Head of caudate nucleus (tissue), 42 donors: ENCODE measurements at regions of chr5 and their contacts with region 1.

Region 1: DNA sequence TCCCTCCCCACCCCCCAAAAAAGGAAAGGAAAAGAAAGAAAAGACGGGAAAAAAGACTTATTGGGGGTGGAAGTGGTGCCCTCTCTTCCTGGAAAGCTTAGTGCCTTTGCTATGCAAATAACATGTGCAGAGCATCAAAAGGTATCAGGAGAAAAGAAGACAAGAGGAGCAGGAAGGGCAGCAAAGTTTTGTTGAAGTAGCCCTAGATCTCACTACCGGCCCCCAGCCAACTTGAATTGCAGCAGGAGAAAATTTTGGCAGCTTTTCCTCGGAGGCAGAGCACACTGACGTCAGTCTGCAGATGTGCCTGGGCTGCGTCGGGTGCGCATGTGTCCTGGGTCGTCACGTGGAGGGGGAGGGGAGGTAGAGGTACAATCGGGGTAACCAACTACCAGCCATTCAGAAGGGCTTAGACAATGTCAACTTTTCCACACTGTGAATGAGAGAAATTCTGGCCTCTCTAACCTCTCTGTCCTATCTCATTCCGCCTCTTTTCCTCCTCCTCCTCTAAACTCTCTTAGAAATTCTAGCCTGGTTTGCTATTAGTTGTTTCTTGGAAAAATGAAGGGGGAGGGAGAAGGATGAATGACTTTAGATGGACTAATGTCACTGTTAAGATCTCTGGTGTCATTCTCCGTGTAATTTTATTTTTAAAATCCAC is at the start of gene ADAMTS6:
- DNase-seq: peak; percentile 68 to 93 (median 82)

Region 2: DNA sequence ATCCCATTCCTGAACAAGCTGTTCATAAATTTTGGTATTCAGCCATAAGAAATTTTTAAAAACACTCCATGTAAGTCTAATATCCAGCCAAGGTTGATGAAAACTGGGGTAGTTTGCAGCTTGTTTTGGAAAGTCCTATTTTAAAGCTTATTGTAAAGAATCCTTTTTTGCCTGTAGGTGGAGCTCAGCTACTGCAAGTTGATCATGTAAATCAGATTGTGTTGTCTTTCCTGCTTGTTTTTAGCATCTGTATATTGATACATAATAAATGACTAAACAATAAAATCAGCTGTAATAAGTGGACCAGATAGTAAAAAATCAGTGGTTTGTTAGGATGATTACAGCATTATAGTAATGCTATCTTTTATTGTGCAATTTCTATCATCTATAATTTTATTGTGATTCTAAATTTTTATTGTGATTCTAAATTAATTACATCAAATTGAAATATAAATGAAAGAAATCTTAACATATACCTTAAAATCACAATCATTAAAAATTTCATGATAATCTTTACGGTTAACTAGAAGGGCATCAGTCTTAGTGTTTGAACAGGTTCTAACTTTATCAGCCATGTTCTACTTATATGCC is 670.6 kb before region 1 on chr5:
- intact Hi-C with region 1: loop called (anchors 10 kb)
- DNase-seq: peak in 7 of 42 donors; percentile 4 to 43 (median 18)

Region 3: DNA sequence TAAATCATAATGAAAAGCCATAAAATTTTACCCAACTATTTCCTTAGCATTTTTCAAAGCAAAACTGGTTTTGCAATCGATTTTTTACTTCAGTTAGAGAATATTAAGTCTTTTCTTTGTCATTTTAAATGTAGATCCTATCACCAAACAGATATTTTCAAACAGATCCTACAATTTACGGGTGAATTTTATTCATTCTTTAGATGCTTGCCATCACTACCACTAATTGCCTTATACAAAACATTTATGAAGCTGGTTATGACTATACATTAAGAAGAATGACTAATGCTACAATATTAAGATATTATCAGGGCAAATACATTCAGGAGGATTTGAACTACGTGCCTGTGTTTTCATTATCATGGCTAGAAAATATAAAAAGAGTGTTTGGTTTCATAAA is 516.2 kb before region 1 on chr5:
- intact Hi-C with region 1: loop called (anchors 10 kb)
- DNase-seq: no peak

Region 4: GRCh38 chr5:65102828-65103711 is 378.7 kb before region 1 on chr5:
- intact Hi-C with region 1: loop called (anchors 5 kb)
- DNase-seq: peak in 41 of 42 donors; percentile 3 to 75 (median 50)

Region 5: DNA sequence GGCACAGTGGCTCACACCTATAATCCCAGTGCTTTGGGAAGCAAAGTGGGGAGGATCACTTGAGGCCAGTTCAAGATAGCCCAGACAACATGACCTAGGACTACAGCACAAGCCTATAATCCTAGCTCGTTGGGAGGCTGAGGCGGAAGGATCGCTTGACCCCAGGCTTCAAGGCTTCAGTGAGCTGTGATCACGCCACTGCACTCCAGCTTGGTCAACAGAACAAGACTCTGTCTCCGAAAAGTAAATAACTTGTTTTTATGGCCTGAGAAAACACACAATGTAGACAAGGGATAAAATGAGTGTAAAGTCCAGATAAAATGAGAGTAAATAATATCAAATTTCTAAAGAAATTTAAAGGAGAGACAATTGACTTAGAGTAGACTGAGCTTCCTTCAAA is 169.4 kb after region 1 on chr5:
- intact Hi-C with region 1: no loop called
- DNase-seq: no peak